GM12878 (cell line): ENCODE measurements at regions of chr17 and their contacts with region 1.

Region 1: DNA sequence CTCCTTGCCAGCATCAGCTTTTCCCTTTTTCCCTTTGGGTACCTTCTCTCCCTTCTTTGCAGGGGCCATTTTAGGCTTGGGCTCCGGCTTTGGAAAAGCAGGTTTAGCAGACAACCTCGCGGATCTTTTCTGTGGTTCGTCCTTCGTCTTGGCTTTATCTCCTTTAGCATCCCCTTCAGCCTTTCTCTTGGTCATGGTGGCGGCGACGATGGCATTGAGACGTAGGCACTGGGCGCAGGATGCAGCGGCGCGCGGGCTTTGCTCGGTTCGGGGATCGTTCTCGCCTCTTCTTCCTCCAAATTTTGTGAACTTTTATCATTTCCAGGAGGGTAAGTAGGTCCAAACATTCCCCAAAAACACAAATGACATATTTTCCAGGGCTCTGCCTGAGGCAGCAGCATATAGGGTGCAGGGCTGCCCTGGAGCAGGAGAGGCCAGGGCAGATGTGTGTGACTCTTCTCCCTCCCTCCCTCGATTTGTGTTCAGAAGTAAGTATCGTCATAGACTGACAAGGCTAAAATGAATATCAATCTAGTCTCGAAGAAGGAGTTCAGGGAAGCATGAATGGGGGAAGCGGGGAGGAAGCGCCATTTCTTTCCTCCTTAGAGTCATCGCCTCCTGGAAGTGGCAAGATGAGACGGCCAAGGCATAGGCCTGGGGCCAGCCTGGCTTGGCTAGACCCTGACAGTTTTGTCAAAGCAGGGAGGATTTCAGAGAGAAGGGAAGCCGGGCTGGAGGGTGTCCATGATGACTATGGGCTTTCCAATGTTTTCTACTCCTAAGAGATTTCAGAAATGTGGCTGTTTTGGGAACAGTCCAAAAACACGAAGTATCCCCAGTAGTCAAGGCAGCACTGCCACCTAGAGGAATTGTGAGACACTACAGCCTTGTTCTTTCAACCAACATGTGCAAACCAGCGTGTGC is 13.2 kb downstream of the CHCT1 start:
- DNase-seq: peak; percentile 31
- ATAC-seq: peak; percentile 79
- H3K4me3 ChIP-seq: no peak overlapping the region
- H3K27ac ChIP-seq: no peak overlapping the region
- H3K4me1 ChIP-seq: peaks cover 13% of the 10 kb centered on the region
- H3K27me3 ChIP-seq: no peaks in the 10 kb centered on the region
- CTCF ChIP-seq: peak; percentile 82 to 96 (median 84); a peak in 5 of 6 replicates
- EP300 ChIP-seq: no peak
- POLR2A ChIP-seq: no peak
- RAD21 ChIP-seq: peak; percentile 94

Region 2: DNA sequence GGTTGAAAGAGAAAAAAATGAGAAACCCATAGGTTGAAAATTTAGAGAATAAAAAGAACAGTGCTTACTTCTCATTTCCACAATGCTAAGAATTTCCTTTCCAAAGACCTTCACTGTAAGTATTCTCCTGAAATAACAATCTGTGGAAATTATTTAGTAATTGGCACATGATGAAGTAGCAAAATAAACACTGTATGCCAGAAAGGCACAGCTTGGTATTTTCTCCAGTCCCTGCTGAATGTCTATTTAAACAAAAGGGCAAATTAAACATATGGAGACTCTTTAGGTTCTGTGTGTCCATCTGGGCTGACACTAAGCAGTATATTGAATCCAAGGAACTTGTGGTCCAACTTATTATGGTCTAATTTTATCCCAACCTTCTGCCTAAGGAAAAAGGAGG is 32.9 kb after region 1 on chr17:
- CTCF ChIA-PET with region 1: no interaction called
- POLR2A ChIA-PET with region 1: interaction called, 10 read pairs
- RAD21 ChIA-PET with region 1: no interaction called
- SMC1A ChIA-PET with region 1: no interaction called
- in situ Hi-C with region 1: no loop called
- intact Hi-C with region 1: no loop called
- DNase-seq: no peak
- ATAC-seq: no peak
- H3K4me3 ChIP-seq: no peak overlapping the region
- H3K27ac ChIP-seq: no peak overlapping the region
- H3K4me1 ChIP-seq: peaks cover 6% of the 10 kb centered on the region; the same call in 1 of the 2 replicates
- H3K27me3 ChIP-seq: no peaks in the 10 kb centered on the region
- CTCF ChIP-seq: no peak
- EP300 ChIP-seq: no peak
- POLR2A ChIP-seq: no peak
- RAD21 ChIP-seq: no peak